HEK293 (cell line): ENCODE measurements at regions of chr2 and their contacts with region 1.

Region 1: DNA sequence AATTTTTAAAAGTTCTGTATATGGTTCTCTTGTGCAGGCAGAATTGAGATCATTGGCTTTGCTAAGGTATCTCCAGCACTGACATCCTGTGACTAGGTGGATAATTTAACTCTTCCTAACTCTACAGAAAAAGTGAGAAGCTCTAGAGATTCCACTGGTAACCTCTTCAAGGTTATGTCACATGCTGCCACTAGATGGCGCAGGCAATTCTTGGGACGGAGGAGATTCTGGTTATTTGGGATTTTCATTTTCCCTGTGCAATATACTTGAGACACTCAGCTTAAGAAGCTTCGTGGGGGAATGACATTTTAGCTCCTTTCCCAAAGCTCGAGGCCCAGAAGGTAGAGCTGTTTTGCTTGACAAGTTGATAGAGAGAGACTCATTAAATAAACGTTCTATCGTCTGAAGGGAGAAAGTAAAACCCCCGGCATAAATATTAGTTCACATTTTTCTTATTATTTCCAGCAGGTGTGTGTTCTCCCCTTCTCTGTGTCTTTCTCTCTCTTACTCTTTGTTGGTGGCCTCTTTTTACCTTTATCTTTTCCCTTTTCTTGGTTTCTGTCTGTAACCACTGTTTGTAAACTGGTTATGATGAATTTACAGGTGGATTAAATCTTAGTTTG is 26.6 kb upstream of the LANCL1 start:
- H3K4me3 ChIP-seq: no peak overlapping the region
- H3K27ac ChIP-seq: no peak overlapping the region
- H3K4me1 ChIP-seq: no peaks in the 10 kb centered on the region
- CTCF ChIP-seq: no peak

Region 2: GRCh38 chr2:210215120-210215519 is 288.0 kb before region 1 on chr2:
- CTCF ChIA-PET with region 1: no interaction called
- POLR2A ChIA-PET with region 1: no interaction called
- H3K4me3 ChIP-seq: no peak overlapping the region
- H3K27ac ChIP-seq: no peak overlapping the region
- H3K4me1 ChIP-seq: no peaks in the 10 kb centered on the region
- CTCF ChIP-seq: no peak

Region 3: DNA sequence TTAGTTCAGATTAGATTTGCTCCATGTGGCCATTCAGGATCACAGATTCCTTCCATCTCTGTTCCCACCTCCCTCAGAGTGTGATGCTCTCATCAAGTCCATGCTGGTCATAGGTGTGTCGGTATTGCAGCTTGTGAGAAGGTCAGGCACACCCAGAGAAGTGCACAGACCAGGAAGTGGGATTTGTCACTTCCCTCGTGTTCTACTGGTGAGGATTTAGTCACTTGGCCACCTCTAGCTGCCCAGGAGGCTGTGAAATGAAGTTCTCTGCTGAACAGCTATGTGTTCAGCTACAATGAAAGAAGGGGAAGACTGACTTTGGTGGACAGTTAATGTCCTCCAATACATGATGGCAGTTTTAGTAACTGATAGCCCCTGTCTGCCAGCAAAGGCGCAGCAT is 23.0 kb before region 1 on chr2:
- CTCF ChIA-PET with region 1: interaction called, 11 read pairs
- POLR2A ChIA-PET with region 1: no interaction called
- H3K4me3 ChIP-seq: no peak overlapping the region
- H3K27ac ChIP-seq: no peak overlapping the region
- H3K4me1 ChIP-seq: no peaks in the 10 kb centered on the region
- CTCF ChIP-seq: no peak

Region 4: GRCh38 chr2:210531050-210531449 is 27.9 kb after region 1 on chr2:
- CTCF ChIA-PET with region 1: interaction called, 10 read pairs
- POLR2A ChIA-PET with region 1: no interaction called
- H3K4me3 ChIP-seq: no peak overlapping the region
- H3K27ac ChIP-seq: no peak overlapping the region
- H3K4me1 ChIP-seq: no peaks in the 10 kb centered on the region
- CTCF ChIP-seq: no peak

Region 5: DNA sequence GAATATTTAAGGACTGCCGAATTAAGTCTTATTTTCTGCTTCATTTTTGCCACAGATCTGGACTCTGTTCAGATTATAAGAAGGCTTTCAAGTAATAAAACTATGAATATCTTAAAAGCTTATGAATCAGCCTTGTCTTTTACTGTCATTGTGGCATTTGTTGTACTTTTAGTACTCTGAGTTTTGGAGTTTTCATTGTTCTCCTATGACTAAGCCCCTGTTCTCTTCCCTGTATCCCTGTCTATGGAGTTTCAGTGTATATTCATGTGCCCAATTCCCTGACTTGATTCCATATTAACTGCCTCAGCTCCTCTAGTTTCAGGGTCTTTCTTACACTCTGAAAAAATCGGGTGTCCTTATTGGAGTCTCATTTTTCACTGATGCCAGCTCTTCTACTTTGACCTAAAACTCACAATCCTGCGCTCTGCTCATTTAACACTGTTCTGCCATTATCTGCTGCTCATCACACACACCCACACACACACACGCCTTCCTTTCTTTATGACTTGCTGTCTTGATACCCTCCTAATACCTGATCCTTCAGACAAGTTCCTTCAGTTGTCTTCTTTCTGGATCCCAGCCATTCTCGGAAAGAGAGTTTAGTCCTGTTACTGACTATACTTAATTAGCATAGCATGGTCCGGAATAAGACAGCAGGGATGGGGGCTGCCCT is 565.1 kb after region 1 on chr2:
- CTCF ChIA-PET with region 1: no interaction called
- POLR2A ChIA-PET with region 1: no interaction called
- H3K4me3 ChIP-seq: no peak overlapping the region
- H3K27ac ChIP-seq: no peak overlapping the region
- H3K4me1 ChIP-seq: no peaks in the 10 kb centered on the region
- CTCF ChIP-seq: no peak